ENCODE measurements at regions of chr11 and their contacts with region 1.

Region 1: GRCh38 chr11:30488304-30488998 is 97.7 kb downstream of the MPPED2 start:
- DNase-seq: no peak
- H3K4me3 ChIP-seq: peak overlapping the region in 1 of 2 donors; percentile 41
- H3K27ac ChIP-seq: peak overlapping the region; percentile 62 to 67
- H3K4me1 ChIP-seq: peaks cover 0 to 32% of the 10 kb centered on the region in 2 donors
- H3K27me3 ChIP-seq: no peaks in the 10 kb centered on the region
- CTCF ChIP-seq: no peak

Region 2: GRCh38 chr11:29826878-29827277 is 661.6 kb before region 1 on chr11:
- intact Hi-C with region 1: no loop called
- DNase-seq: no peak
- H3K4me3 ChIP-seq: no peak overlapping the region
- H3K27ac ChIP-seq: no peak overlapping the region
- H3K4me1 ChIP-seq: no peaks in the 10 kb centered on the region
- H3K27me3 ChIP-seq: no peaks in the 10 kb centered on the region
- CTCF ChIP-seq: no peak

Region 3: DNA sequence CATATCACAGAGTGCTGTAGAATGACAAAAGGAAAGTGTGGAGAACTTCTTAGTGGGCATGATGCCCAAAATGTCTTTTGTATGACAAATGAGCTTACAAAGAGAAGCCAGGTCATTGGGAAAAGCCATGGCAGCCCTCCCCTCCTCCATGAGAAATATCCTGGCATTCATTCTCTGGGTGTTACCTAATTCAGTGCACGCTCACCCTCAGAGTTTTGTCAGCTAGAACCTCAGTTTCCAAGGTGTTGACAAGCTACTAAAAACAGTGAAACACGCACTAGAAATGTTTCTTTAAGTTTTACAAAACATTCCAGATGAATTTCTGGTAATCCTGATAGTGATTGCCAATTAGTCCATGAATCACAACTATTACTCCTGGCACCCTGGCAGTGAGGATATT is 363.0 kb before region 1 on chr11:
- intact Hi-C with region 1: no loop called
- DNase-seq: no peak
- H3K4me3 ChIP-seq: no peak overlapping the region
- H3K27ac ChIP-seq: no peak overlapping the region
- H3K4me1 ChIP-seq: no peaks in the 10 kb centered on the region
- H3K27me3 ChIP-seq: no peaks in the 10 kb centered on the region
- CTCF ChIP-seq: no peak

Region 4: GRCh38 chr11:30432178-30432577 is 56.3 kb before region 1 on chr11:
- intact Hi-C with region 1: loop called (anchors 5 kb)
- DNase-seq: no peak
- H3K4me3 ChIP-seq: no peak overlapping the region
- H3K27ac ChIP-seq: peak overlapping the region; percentile 77 to 80
- H3K4me1 ChIP-seq: peaks cover 0 to 35% of the 10 kb centered on the region in 2 donors
- H3K27me3 ChIP-seq: no peaks in the 10 kb centered on the region
- CTCF ChIP-seq: no peak

Region 5: GRCh38 chr11:30465192-30465591 is 23.3 kb before region 1 on chr11:
- intact Hi-C with region 1: no loop called
- DNase-seq: no peak
- H3K4me3 ChIP-seq: no peak overlapping the region
- H3K27ac ChIP-seq: peak overlapping the region; percentile 69 to 78
- H3K4me1 ChIP-seq: peaks cover 5 to 45% of the 10 kb centered on the region in 2 donors
- H3K27me3 ChIP-seq: no peaks in the 10 kb centered on the region
- CTCF ChIP-seq: no peak